ENCODE measurements at regions of chr9 and their contacts with region 1.

Region 1: DNA sequence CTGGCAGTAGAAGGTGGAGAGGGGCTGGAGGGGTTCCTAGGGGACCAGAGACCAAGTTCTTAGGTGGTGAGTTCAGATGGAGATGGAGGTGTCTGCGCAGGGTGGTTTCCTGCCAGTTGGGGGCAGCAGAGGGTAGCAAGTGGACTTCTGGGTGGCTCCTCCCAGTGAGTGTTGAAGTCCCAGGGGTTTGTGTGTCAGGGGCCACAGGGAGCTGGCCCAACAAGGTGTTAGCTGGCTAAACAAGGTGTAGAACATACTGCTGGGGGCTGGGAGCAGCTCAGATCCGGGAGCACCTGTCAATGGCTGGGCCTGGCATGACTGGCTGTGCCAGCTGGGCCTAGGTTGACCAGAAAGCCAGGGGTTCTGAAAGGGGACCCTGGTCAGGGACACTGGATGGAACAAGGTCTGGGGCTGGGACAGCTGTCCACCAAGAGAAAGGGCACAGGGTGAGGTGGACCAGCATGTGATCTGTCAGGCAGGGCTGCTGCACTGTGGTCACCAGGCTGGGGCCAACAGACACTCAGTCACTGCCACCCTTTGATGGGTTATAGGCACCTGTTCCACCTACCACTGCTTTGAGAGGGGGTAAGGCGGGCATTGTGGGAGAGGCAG is 35.6 kb downstream of the DAB2IP start:
- DNase-seq: peak; percentile 91
- H3K4me3 ChIP-seq: no peak overlapping the region
- H3K27ac ChIP-seq: peak overlapping the region in 2 of 4 donors; percentile 54 to 59
- H3K4me1 ChIP-seq: peaks cover 0 to 35% (median 25%) of the 10 kb centered on the region in 4 donors
- H3K27me3 ChIP-seq: no peaks in the 10 kb centered on the region
- CTCF ChIP-seq: peak; percentile 80 to 85 (median 84)
- EP300 ChIP-seq: no peak
- POLR2A ChIP-seq: no peak

Region 2: DNA sequence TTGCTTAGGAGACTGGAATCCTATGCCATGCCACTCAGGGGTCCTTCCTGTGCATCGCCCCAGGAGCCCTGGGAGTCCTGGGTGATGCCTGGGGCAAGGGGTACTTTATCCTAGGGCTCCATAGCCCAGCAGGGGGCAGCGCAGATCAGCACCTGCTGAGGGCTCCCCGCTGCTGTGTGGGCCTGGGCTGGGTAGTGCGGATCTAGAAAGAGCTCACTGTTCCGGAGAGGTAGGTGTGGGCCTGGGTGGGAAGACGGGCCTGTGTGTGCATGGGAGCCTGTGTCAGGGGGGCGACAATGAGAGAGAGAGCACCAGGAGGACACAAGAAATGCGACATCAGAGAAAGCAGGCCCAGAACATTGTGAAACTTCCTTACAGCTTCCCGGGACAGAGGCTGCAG is 47.0 kb before region 1 on chr9:
- intact Hi-C with region 1: loop called (anchors 5 kb)
- DNase-seq: peak; percentile 82
- H3K4me3 ChIP-seq: no peak overlapping the region
- H3K27ac ChIP-seq: peak overlapping the region in 3 of 4 donors; percentile 40 to 69 (median 51)
- H3K4me1 ChIP-seq: peaks cover 0 to 53% (median 51%) of the 10 kb centered on the region in 4 donors
- H3K27me3 ChIP-seq: no peaks in the 10 kb centered on the region
- CTCF ChIP-seq: peak; percentile 28 to 64 (median 64)
- EP300 ChIP-seq: no peak
- POLR2A ChIP-seq: no peak

Region 3: GRCh38 chr9:121770415-121771273 is 83.6 kb after region 1 on chr9:
- intact Hi-C with region 1: no loop called
- DNase-seq: peak; percentile 57
- H3K4me3 ChIP-seq: no peak overlapping the region
- H3K27ac ChIP-seq: peak overlapping the region; percentile 11 to 59 (median 40)
- H3K4me1 ChIP-seq: peaks cover 0 to 21% (median 16%) of the 10 kb centered on the region in 4 donors
- H3K27me3 ChIP-seq: no peaks in the 10 kb centered on the region
- CTCF ChIP-seq: no peak
- EP300 ChIP-seq: no peak
- POLR2A ChIP-seq: no peak

Region 4: GRCh38 chr9:121861501-121862180 is 174.6 kb after region 1 on chr9:
- intact Hi-C with region 1: loop called (anchors 10 kb)
- DNase-seq: no peak
- H3K4me3 ChIP-seq: no peak overlapping the region
- H3K27ac ChIP-seq: no peak overlapping the region
- H3K4me1 ChIP-seq: peaks cover 0 to 12% (median 3%) of the 10 kb centered on the region in 4 donors
- H3K27me3 ChIP-seq: no peaks in the 10 kb centered on the region
- CTCF ChIP-seq: peak in 3 of 4 experiments; percentile 10 to 30 (median 26)
- EP300 ChIP-seq: no peak
- POLR2A ChIP-seq: no peak

Region 5: GRCh38 chr9:121992571-121993212 is 305.7 kb after region 1 on chr9:
- intact Hi-C with region 1: loop called (anchors 1 kb)
- DNase-seq: peak; percentile 85
- H3K4me3 ChIP-seq: no peak overlapping the region
- H3K27ac ChIP-seq: no peak overlapping the region
- H3K4me1 ChIP-seq: peaks cover 0 to 9% (median 6%) of the 10 kb centered on the region in 4 donors
- H3K27me3 ChIP-seq: no peaks in the 10 kb centered on the region
- CTCF ChIP-seq: peak; percentile 67 to 77 (median 75)
- EP300 ChIP-seq: no peak
- POLR2A ChIP-seq: no peak

Region 6: GRCh38 chr9:122065923-122066629 is 379.0 kb after region 1 on chr9:
- intact Hi-C with region 1: no loop called
- DNase-seq: no peak
- H3K4me3 ChIP-seq: no peak overlapping the region
- H3K27ac ChIP-seq: no peak overlapping the region
- H3K4me1 ChIP-seq: peaks cover 0 to 53% (median 19%) of the 10 kb centered on the region in 4 donors
- H3K27me3 ChIP-seq: no peaks in the 10 kb centered on the region
- CTCF ChIP-seq: no peak
- EP300 ChIP-seq: no peak
- POLR2A ChIP-seq: no peak